ENCODE measurements at regions of chr9 and their contacts with region 1.

Region 1: DNA sequence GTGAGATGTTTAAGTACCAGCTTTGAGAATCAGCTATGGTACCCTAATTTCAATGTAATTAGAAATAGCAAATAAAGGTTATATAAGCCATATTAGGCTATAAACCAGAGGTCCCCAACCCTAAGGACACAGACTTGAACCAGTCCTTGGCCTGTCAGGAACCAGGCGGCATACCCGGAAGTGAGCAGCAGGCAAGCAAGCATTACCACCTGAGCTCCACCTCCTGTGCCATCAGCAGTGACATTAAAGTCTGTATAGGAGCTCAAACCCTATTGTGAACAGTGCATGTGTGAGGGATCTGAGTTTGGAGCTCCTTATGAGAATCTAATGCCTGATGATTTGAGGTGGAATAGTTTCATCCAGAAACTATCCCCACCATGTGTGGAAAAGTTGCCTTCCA is 1009.5 kb downstream of the PTPRD start:
- DNase-seq: no peak

Region 2: GRCh38 chr9:9790216-9790872 is 187.0 kb after region 1 on chr9:
- intact Hi-C with region 1: loop called (anchors 5 kb)
- DNase-seq: peak in 33 of 42 donors; percentile 6 to 78 (median 46)

Region 3: DNA sequence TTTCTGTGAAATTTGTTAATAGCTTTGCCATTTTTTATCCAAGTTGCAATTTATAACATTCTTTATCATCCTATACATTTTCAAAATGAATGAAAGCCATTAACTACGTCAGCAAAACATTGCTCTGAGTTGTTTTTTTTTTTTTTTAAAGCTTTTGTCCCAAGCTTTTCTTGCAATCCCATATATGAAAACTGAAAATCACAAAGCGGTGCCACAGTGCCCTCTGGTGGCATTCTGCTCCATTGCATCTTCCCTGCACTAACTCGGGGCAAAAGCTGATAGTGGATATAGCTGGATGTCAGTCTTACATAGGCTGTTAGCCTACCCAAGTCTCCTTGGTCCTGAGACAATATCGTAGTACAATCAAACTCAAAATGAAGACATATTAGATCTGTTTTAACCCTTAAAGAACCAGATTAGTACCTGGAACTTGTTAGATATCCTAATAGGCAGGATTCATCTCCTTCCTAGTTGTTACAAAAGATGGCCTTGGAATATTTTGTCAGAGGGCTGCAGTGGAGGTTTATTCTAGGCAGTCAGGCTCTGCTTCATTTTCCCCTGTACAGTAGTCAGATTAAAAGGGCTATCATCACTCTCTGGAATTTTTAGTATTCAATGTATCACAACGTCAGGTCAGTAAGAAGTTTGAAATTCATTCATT is 339.5 kb after region 1 on chr9:
- intact Hi-C with region 1: loop called (anchors 10 kb)
- DNase-seq: peak; percentile 8 to 89 (median 77)